HepG2 (cell line): ENCODE measurements at regions of chr16 and their contacts with region 1.

Region 1: GRCh38 chr16:58755989-58756649 is 22.0 kb upstream of the GOT2 start:
- DNase-seq: peak; percentile 81
- ATAC-seq: peak; percentile 98
- H3K4me3 ChIP-seq: no peak overlapping the region; a peak in 1 of 6 replicates
- H3K27ac ChIP-seq: no peak overlapping the region
- H3K4me1 ChIP-seq: peaks cover 6% of the 10 kb centered on the region
- H3K27me3 ChIP-seq: peaks cover 6 to 19% of the 10 kb centered on the region in 2 experiments; a peak in 3 of 5 replicates
- CTCF ChIP-seq: peak; percentile 97
- EP300 ChIP-seq: no peak
- POLR2A ChIP-seq: no peak
- RAD21 ChIP-seq: peak; percentile 94

Region 2: GRCh38 chr16:58336332-58337089 is 419.6 kb before region 1 on chr16:
- CTCF ChIA-PET with region 1: interaction called, 9 read pairs
- POLR2A ChIA-PET with region 1: no interaction called
- in situ Hi-C with region 1: loop called (anchors 10 kb)
- intact Hi-C with region 1: loop called (anchors 1 kb)
- DNase-seq: peak; percentile 78
- ATAC-seq: peak; percentile 87
- H3K4me3 ChIP-seq: peak overlapping the region in 2 of 3 experiments; percentile 30 to 42; a peak in 2 of 6 replicates
- H3K27ac ChIP-seq: no peak overlapping the region
- H3K4me1 ChIP-seq: peaks cover 18% of the 10 kb centered on the region
- H3K27me3 ChIP-seq: no peaks in the 10 kb centered on the region
- CTCF ChIP-seq: peak; percentile 94
- EP300 ChIP-seq: no peak
- POLR2A ChIP-seq: no peak
- RAD21 ChIP-seq: peak; percentile 90

Region 3: GRCh38 chr16:58515125-58515870 is 240.8 kb before region 1 on chr16 and contains the start of gene SETD6:
- CTCF ChIA-PET with region 1: interaction called, 4 read pairs
- POLR2A ChIA-PET with region 1: no interaction called
- in situ Hi-C with region 1: no loop called
- intact Hi-C with region 1: loop called (anchors 1 kb)
- DNase-seq: peak; percentile 83
- ATAC-seq: peak; percentile 86
- H3K4me3 ChIP-seq: peak within 1 kb of the TSS; percentile 58 to 91 (median 80)
- H3K27ac ChIP-seq: peak within 1 kb of the TSS; percentile 76
- H3K4me1 ChIP-seq: peaks cover 32% of the 10 kb centered on the region
- H3K27me3 ChIP-seq: no peaks in the 10 kb centered on the region
- CTCF ChIP-seq: peak; percentile 46
- EP300 ChIP-seq: no peak
- POLR2A ChIP-seq: peak; percentile 84 to 97
- RAD21 ChIP-seq: peak; percentile 42; the same call in 1 of the 2 replicates
- total RNA-seq, gene SETD6: 17.4 and 25.7 TPM in 2 replicates

Region 4: DNA sequence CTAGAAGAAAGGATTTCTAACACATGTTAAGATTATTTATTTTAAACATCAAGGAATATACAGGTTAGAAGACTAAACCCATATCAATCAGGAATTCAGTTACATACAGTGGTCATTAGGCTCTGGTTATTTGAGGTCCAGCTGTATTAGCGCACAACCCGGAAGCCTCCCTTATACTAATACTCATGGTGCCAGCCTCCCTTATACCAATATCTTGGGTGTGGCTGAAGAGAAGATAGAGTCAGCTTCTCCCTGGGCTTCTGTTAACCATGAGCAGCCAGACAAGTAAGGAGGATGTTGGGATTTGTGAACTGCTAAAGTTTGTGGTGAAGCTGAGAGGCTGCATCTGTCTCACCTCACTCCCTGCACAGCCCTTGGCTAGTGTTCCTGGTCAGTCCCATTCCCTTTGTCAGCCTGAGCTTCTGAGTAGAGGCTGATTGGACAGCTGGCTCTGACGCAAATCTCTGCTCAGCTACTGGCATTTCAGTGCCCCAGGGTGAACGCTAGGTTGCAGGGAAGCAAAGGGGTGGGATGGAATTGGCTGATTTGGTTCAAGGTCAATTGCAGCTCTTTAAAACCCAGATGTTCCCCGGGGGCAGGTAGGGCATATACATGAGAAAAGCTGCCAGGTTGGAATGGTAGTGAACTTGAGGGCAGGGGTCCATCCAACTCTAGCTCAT is 103.5 kb before region 1 on chr16:
- CTCF ChIA-PET with region 1: no interaction called
- POLR2A ChIA-PET with region 1: no interaction called
- in situ Hi-C with region 1: no loop called
- intact Hi-C with region 1: loop called (anchors 2 kb)
- DNase-seq: peak; percentile 57
- ATAC-seq: peak; percentile 56
- H3K4me3 ChIP-seq: no peak overlapping the region
- H3K27ac ChIP-seq: no peak overlapping the region
- H3K4me1 ChIP-seq: peaks cover 72% of the 10 kb centered on the region
- H3K27me3 ChIP-seq: no peaks in the 10 kb centered on the region
- CTCF ChIP-seq: no peak
- EP300 ChIP-seq: no peak
- POLR2A ChIP-seq: no peak
- RAD21 ChIP-seq: no peak

Region 5: DNA sequence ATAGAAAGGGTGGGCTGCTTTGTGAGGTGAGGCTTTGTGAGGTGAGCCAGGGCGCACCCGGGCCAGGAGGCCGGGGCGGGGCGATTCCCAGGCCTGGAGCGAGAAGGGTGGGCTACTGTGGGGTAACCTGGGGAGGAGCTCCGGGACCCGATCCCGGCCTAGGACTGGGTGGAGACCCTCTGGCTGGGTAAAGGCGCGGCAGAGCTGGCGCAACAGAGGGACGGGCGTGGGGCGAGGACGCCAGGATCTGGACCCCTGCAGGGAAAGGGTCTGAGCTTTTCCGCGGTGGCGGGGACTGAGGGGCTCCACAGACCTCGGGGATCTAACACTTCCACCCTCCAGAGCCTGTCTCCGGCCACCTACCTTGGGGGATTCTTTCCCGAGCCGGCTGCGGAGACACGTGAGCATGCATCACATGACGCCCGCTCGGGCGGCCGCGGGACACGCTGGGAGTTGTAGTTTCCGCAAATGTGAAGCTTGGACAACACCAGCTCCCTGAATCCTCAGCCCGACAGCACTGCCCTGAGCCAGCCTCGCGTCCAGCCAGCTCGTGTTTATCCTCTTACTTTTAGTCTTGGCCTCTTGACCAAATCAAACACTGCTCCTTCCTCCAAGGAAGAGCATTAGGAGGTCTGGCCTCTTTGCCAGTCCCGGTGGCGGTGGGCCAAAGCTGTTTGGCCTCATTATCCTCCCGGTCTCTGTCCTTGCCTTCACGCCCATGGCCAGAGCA is 71.6 kb before region 1 on chr16 and contains the start of gene SLC38A7:
- CTCF ChIA-PET with region 1: no interaction called
- POLR2A ChIA-PET with region 1: interaction called, 7 read pairs
- in situ Hi-C with region 1: loop called (anchors 5 kb)
- intact Hi-C with region 1: no loop called
- DNase-seq: peak; percentile 83
- ATAC-seq: peak; percentile 97
- H3K4me3 ChIP-seq: peak within 1 kb of the TSS; percentile 81 to 91 (median 88)
- H3K27ac ChIP-seq: peak within 1 kb of the TSS; percentile 48
- H3K4me1 ChIP-seq: peaks cover 19% of the 10 kb centered on the region
- H3K27me3 ChIP-seq: no peaks in the 10 kb centered on the region; a peak in 1 of 5 replicates
- CTCF ChIP-seq: peak; percentile 13; the same call in 1 of the 2 replicates
- EP300 ChIP-seq: no peak
- POLR2A ChIP-seq: peak; percentile 66 to 81
- RAD21 ChIP-seq: no peak; the same call in 1 of the 2 replicates
- total RNA-seq, gene SLC38A7: 6.2 and 14.1 TPM in 2 replicates

Region 6: GRCh38 chr16:58699151-58699550 is 57.0 kb before region 1 on chr16:
- CTCF ChIA-PET with region 1: no interaction called
- POLR2A ChIA-PET with region 1: no interaction called
- in situ Hi-C with region 1: no loop called
- intact Hi-C with region 1: no loop called
- DNase-seq: no peak
- ATAC-seq: no peak
- H3K4me3 ChIP-seq: no peak overlapping the region
- H3K27ac ChIP-seq: no peak overlapping the region
- H3K4me1 ChIP-seq: peaks cover 4% of the 10 kb centered on the region
- H3K27me3 ChIP-seq: no peaks in the 10 kb centered on the region
- CTCF ChIP-seq: no peak
- EP300 ChIP-seq: no peak
- POLR2A ChIP-seq: no peak
- RAD21 ChIP-seq: no peak